Naive thymus-derived CD4-positive, alpha-beta T cell (primary cell): ENCODE measurements at regions of chr20 and their contacts with region 1.

Region 1: DNA sequence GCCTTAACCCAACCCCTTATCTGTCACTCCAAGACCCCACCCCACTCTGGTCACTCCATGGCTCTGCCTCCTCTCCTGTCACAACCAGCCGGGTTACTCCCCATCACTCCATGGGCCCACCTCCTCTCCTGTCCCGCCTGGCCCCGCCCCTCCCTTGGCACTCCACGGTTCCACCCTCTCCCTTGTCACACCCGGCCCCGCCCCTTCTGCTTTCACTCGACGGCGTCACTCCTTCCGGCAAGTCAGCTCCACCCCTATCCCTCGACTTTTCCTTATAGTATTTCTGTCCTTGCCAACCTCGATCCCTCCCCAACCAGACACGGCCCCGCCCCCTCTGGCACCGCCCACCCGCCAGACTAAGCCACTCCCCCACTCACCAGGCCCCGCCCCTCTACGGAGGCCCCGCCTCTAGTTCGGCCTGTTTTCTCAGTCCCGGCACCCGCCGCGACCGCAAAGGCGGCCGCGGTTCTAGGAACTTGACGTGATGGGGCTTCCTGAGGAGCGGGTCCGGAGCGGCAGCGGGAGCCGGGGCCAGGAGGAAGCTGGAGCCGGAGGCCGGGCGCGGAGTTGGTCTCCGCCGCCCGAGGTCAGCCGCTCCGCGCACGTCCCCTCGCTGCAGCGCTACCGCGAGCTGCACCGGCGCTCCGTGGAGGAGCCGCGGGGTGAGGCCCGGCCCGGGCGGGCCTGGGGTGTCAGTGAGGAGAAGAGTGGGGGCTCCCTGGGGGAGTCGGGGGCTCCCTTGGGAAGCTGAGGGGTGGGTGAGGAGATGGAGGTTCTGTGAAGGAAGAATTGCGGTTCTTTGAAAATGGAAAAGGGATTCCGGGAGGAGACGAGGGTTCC is at the start of gene ACSS2:
- DNase-seq: peak; percentile 88 to 99 (median 92)
- ATAC-seq: peak; percentile 91
- H3K4me3 ChIP-seq: peak within 1 kb of the TSS; percentile 87
- H3K4me3 Mint-ChIP-seq: peak within 1 kb of the TSS; percentile 78 to 99 (median 90)
- H3K27ac ChIP-seq: peak within 1 kb of the TSS; percentile 74
- H3K27ac Mint-ChIP-seq: peak within 1 kb of the TSS; percentile 68 to 96 (median 88)
- H3K4me1 ChIP-seq: peaks cover 35 to 43% of the 10 kb centered on the region in 2 donors
- H3K4me1 Mint-ChIP-seq: peaks cover 47 to 79% (median 72%) of the 10 kb centered on the region in 7 donors
- H3K27me3 ChIP-seq: no peaks in the 10 kb centered on the region
- H3K27me3 Mint-ChIP-seq: no peaks in the 10 kb centered on the region
- total RNA-seq, gene ACSS2: 37.3 to 51.7 (median 43.3) TPM

Region 2: DNA sequence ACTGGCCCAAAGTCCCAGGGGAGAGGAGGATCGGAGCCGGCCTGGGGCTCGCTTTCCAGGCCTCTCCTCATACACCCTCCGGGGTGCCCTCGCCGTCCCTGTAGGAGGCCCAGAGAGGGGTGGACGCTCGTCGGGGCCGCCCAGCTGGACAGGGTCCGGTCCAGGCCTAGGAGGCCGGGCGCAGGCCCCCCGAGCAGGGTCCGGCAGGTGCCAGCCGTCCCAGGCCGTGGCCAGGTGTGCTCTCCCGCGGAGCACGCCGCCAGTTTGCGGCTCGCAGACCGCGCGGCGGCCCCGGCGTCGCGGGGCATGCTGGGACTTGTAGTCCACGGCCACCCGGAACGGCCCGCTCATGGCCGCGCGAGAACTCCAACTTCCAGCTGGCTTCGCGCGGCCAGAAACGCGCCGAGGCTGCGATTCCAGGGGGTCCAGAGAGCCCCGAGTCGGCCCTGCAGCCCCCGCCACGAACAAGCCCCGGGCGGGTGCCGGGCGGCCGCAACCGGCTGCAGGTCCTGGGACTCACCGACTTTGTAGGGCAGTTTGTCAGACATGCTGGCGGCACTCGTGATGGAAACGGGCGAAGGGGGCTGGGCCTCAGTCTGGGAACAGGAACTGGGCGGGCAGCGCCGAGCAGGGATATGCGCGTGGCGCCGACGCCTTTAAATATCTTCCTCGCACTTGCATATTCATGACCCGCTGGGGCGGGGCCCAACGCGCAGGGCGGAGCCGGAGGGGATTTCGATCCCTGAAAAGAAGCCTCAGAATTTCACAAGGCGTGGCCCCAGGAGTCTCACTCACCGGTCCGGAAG is 573.5 kb before region 1 on chr20 and contains the start of gene AHCY:
- CTCF ChIA-PET with region 1: no interaction called
- POLR2A ChIA-PET with region 1: no interaction called
- intact Hi-C with region 1: loop called in 1 of 2 experiments (anchors 1 kb)
- DNase-seq: peak; percentile 84 to 95 (median 92)
- ATAC-seq: peak; percentile 96
- H3K4me3 ChIP-seq: peak within 1 kb of the TSS; percentile 91
- H3K4me3 Mint-ChIP-seq: peak within 1 kb of the TSS; percentile 90 to 96 (median 91)
- H3K27ac ChIP-seq: peak within 1 kb of the TSS; percentile 87
- H3K27ac Mint-ChIP-seq: peak within 1 kb of the TSS; percentile 89 to 95 (median 93)
- H3K4me1 ChIP-seq: peaks cover 3 to 6% of the 10 kb centered on the region in 2 donors
- H3K4me1 Mint-ChIP-seq: peaks cover 0 to 27% (median 14%) of the 10 kb centered on the region in 7 donors
- H3K27me3 ChIP-seq: no peaks in the 10 kb centered on the region
- H3K27me3 Mint-ChIP-seq: peaks cover 0 to 2% (median 0%) of the 10 kb centered on the region in 5 donors
- total RNA-seq, gene AHCY: 19.1 to 62.9 (median 23.7) TPM

Region 3: GRCh38 chr20:34676642-34677373 is 199.6 kb before region 1 on chr20 and contains the start of gene PIGU:
- CTCF ChIA-PET with region 1: no interaction called
- POLR2A ChIA-PET with region 1: no interaction called
- intact Hi-C with region 1: no loop called
- DNase-seq: peak; percentile 88 to 97 (median 96)
- ATAC-seq: peak; percentile 99
- H3K4me3 ChIP-seq: peak within 1 kb of the TSS; percentile 63
- H3K4me3 Mint-ChIP-seq: peak within 1 kb of the TSS; percentile 95 to 99 (median 96)
- H3K27ac ChIP-seq: peak within 1 kb of the TSS; percentile 95
- H3K27ac Mint-ChIP-seq: peak within 1 kb of the TSS; percentile 85 to 98 (median 97)
- H3K4me1 ChIP-seq: peaks cover 4 to 5% of the 10 kb centered on the region in 2 donors
- H3K4me1 Mint-ChIP-seq: peaks cover 14 to 37% (median 24%) of the 10 kb centered on the region in 7 donors
- H3K27me3 ChIP-seq: no peaks in the 10 kb centered on the region
- H3K27me3 Mint-ChIP-seq: no peaks in the 10 kb centered on the region
- total RNA-seq, gene PIGU: 8.6 to 21.3 (median 16.1) TPM

Region 4: GRCh38 chr20:34825530-34826362 is 50.6 kb before region 1 on chr20 and contains the start of gene NCOA6:
- CTCF ChIA-PET with region 1: interaction called, 4 read pairs
- POLR2A ChIA-PET with region 1: interaction called, 3 read pairs
- intact Hi-C with region 1: loop called (anchors 1 to 2 kb)
- DNase-seq: peak; percentile 56 to 86 (median 74)
- ATAC-seq: peak; percentile 90
- H3K4me3 ChIP-seq: peak within 1 kb of the TSS; percentile 78
- H3K4me3 Mint-ChIP-seq: peak within 1 kb of the TSS; percentile 83 to 100 (median 98)
- H3K27ac ChIP-seq: peak within 1 kb of the TSS; percentile 76
- H3K27ac Mint-ChIP-seq: peak within 1 kb of the TSS; percentile 85 to 95 (median 91)
- H3K4me1 ChIP-seq: peaks cover 16 to 17% of the 10 kb centered on the region in 2 donors
- H3K4me1 Mint-ChIP-seq: peaks cover 30 to 50% (median 43%) of the 10 kb centered on the region in 7 donors
- H3K27me3 ChIP-seq: no peaks in the 10 kb centered on the region
- H3K27me3 Mint-ChIP-seq: peaks cover 0 to 17% (median 0%) of the 10 kb centered on the region in 5 donors
- total RNA-seq, gene NCOA6: 23.6 to 31.9 (median 29.3) TPM

Region 5: DNA sequence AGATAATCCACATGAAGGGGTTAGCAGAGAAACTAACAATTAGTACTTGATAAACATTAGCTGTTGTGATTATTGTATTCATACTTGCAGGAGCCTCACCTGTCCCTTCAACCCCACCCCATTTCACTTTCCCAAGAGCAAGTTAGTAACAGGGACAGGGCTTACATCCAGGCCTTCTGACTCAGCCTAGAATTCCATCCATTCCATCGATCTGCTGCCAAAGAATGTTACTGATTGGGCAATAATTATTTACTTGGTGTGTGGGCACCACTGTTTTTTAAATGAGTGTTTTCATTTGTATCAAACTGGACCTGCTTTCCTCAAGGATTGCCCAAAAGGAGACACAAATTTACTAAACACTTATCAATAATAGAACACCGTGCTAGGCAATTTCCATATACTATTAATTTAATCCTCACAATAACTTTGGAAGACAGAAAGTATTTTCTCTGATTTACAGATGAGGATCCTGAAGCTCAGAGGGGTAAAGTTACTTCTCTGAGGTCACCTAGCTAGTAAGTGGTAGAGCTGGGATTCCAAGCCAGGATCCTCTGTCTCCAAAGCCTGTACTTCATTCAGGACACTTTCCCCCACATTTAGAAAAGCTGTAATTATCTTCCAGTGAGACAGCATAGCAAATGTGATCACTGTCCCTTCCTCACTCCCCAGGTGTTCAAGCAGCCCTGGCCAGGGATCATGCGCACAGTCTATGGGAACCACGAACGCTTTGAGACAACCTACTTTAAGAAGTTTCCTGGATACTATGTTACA is 46.5 kb after region 1 on chr20:
- CTCF ChIA-PET with region 1: no interaction called
- POLR2A ChIA-PET with region 1: interaction called, 3 read pairs
- intact Hi-C with region 1: loop called in 1 of 2 experiments (anchors 1 kb)
- DNase-seq: no peak
- ATAC-seq: no peak
- H3K4me3 ChIP-seq: no peak overlapping the region
- H3K4me3 Mint-ChIP-seq: no peak overlapping the region
- H3K27ac ChIP-seq: no peak overlapping the region
- H3K27ac Mint-ChIP-seq: no peak overlapping the region
- H3K4me1 ChIP-seq: peaks cover 6 to 12% of the 10 kb centered on the region in 2 donors
- H3K4me1 Mint-ChIP-seq: peaks cover 16 to 50% (median 25%) of the 10 kb centered on the region in 7 donors
- H3K27me3 ChIP-seq: no peaks in the 10 kb centered on the region
- H3K27me3 Mint-ChIP-seq: no peaks in the 10 kb centered on the region

Region 6: GRCh38 chr20:35001596-35002362 is 125.4 kb after region 1 on chr20:
- CTCF ChIA-PET with region 1: interaction called, 3 read pairs
- POLR2A ChIA-PET with region 1: no interaction called
- intact Hi-C with region 1: loop called in 1 of 2 experiments (anchors 2 kb)
- DNase-seq: no peak
- ATAC-seq: no peak
- H3K4me3 ChIP-seq: no peak overlapping the region
- H3K4me3 Mint-ChIP-seq: no peak overlapping the region
- H3K27ac ChIP-seq: no peak overlapping the region
- H3K27ac Mint-ChIP-seq: peak overlapping the region in 1 of 9 donors; percentile 69
- H3K4me1 ChIP-seq: no peaks in the 10 kb centered on the region
- H3K4me1 Mint-ChIP-seq: peaks cover 0 to 5% (median 0%) of the 10 kb centered on the region in 7 donors
- H3K27me3 ChIP-seq: no peaks in the 10 kb centered on the region
- H3K27me3 Mint-ChIP-seq: no peaks in the 10 kb centered on the region

Region 7: GRCh38 chr20:35207950-35208611 is 331.7 kb after region 1 on chr20:
- CTCF ChIA-PET with region 1: no interaction called
- POLR2A ChIA-PET with region 1: no interaction called
- intact Hi-C with region 1: loop called (anchors 1 kb)
- DNase-seq: peak; percentile 46 to 75 (median 64)
- ATAC-seq: peak; percentile 96
- H3K4me3 ChIP-seq: no peak overlapping the region
- H3K4me3 Mint-ChIP-seq: no peak overlapping the region
- H3K27ac ChIP-seq: no peak overlapping the region
- H3K27ac Mint-ChIP-seq: no peak overlapping the region
- H3K4me1 ChIP-seq: no peaks in the 10 kb centered on the region
- H3K4me1 Mint-ChIP-seq: no peaks in the 10 kb centered on the region
- H3K27me3 ChIP-seq: no peaks in the 10 kb centered on the region
- H3K27me3 Mint-ChIP-seq: no peaks in the 10 kb centered on the region

Region 8: DNA sequence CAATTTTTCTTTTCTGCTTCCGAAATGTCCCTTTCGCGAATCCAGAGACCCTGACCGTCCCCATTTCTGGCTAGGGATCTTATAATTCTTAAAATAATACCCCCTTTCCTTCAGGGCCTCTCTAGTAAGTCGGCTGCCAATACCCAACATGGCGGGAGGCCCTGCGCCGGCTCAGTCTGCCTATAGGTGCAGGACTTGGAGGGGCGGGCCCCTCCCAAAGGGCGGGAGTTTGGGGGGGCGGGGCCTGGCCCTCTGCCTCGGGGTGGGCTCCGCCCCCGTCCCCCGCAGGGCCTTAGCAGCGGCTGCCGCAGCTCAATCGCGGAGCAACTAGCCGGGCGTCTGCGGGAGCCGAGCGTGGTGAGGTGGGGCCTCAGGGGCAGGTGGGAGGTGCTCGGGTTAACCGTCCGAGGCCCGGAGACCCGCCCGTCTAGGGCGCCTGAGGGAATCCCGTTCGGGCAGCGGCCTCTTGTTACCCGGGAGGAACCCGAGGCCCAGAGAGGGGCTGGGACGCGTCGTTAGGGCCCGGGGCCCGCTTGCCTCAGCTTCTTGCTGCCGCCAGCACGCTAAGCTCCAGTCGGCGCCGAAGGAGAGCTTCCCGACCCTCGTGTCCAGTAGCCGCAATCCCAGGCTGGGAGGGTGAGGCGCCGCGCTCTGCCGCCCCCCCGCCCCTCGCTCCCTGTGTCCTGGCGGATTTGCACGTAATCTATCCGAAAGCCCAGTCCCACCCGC is 578.7 kb after region 1 on chr20 and contains the start of gene CEP250:
- CTCF ChIA-PET with region 1: no interaction called
- POLR2A ChIA-PET with region 1: no interaction called
- intact Hi-C with region 1: loop called in 1 of 2 experiments (anchors 10 kb)
- DNase-seq: peak; percentile 89 to 97 (median 96)
- ATAC-seq: peak; percentile 99
- H3K4me3 ChIP-seq: peak within 1 kb of the TSS; percentile 94
- H3K4me3 Mint-ChIP-seq: peak within 1 kb of the TSS; percentile 82 to 98 (median 93)
- H3K27ac ChIP-seq: peak within 1 kb of the TSS; percentile 94
- H3K27ac Mint-ChIP-seq: peak within 1 kb of the TSS; percentile 86 to 99 (median 98)
- H3K4me1 ChIP-seq: no peaks in the 10 kb centered on the region
- H3K4me1 Mint-ChIP-seq: peaks cover 0 to 38% (median 23%) of the 10 kb centered on the region in 7 donors
- H3K27me3 ChIP-seq: no peaks in the 10 kb centered on the region
- H3K27me3 Mint-ChIP-seq: no peaks in the 10 kb centered on the region
- total RNA-seq, gene CEP250: 34.5 to 75.0 (median 70.7) TPM